Lower lobe of right lung (tissue), 2 donors: ENCODE measurements at regions of chr1 and their contacts with region 1.

Region 1: GRCh38 chr1:157992031-157992832 is 1.2 kb upstream of the KIRREL1 start:
- DNase-seq: no peak
- ATAC-seq: peak; percentile 75 to 80
- H3K4me3 ChIP-seq: no peak overlapping the region
- H3K27ac ChIP-seq: peak overlapping the region; percentile 41
- H3K4me1 ChIP-seq: peaks cover 18% of the 10 kb centered on the region
- H3K27me3 ChIP-seq: peaks cover 19% of the 10 kb centered on the region
- CTCF ChIP-seq: peak; percentile 93

Region 2: DNA sequence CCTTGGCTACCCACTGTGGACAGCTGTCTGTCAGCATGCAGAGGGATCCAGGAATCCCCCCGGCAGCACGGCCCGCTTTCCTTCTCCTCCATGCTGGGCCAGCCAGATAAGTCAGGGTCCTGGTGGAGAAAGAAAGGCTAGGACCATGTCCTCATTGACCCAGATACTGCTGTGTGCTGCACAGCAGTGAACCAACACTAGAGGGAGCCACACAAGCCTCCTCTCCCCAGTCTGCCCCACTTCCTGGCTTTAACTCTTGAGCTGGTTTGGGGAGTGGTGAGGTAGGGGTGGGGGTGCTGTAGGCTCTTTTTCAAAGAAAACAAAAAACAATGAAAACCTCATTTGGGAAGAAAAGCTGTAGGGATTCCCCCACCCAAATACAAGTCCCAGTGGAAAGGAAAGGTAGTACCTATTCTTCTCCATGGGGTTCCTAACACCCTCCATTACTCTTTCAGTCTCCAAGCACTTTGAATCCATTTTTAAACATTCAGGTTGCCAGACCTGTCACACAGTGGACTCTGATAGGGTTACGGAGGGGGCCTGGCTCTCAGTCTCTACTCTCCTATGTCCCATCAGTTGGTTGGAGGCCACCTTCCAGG is 103.6 kb after region 1 on chr1:
- intact Hi-C with region 1: loop called (anchors 10 kb)
- DNase-seq: no peak
- ATAC-seq: peak; percentile 60 to 67
- H3K4me3 ChIP-seq: no peak overlapping the region
- H3K27ac ChIP-seq: no peak overlapping the region
- H3K4me1 ChIP-seq: no peaks in the 10 kb centered on the region
- H3K27me3 ChIP-seq: no peaks in the 10 kb centered on the region
- CTCF ChIP-seq: peak; percentile 69